Activated CD4-positive, alpha-beta memory T cell treated with anti-CD3 and anti-CD28 coated beads for 36 hours (primary cell): ENCODE measurements at regions of chr11 and their contacts with region 1.

Region 1: GRCh38 chr11:119363851-119364590 is 17.5 kb downstream of the USP2 start:
- DNase-seq: peak; percentile 64
- H3K4me3 Mint-ChIP-seq: no peak overlapping the region
- H3K27ac Mint-ChIP-seq: no peak overlapping the region
- H3K4me1 Mint-ChIP-seq: peaks cover 34% of the 10 kb centered on the region
- H3K27me3 Mint-ChIP-seq: peaks cover 48% of the 10 kb centered on the region

Region 2: DNA sequence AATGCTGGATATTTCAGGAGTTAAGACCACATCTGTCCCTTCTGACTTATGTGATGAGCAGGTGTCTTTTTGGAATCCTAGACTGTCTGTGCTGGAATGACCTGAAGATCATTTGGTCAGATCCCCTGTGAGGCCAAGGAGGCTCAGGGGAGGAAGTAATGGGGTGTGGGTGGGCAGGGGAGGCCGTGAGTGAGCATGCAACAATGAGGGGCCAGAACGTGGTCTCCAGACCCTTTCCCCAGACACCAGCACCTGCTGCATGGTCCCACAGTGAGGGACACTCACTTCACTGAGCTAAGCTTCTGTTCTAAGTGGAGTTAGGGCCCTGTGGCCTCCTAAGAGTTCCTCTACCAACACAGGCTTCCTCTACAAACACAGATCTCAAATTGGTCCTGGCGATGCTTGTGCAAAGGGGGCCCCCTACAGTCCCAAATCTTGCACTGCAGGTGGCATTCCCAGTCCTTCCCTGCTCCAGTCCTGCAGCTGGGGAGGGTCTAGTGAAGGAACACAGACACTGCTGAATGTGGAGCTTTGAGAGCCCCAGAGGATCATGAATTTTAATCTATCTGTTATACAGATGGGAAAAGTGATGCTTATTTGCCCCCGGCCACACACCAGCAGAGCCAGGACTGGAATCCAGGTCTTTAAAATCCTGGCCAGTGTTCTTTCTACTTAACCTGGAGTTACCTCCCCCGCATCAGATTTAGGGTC is 10.1 kb after region 1 on chr11:
- CTCF ChIA-PET with region 1: interaction called, 237 read pairs
- POLR2A ChIA-PET with region 1: interaction called, 3 read pairs
- intact Hi-C with region 1: no loop called
- DNase-seq: peak; percentile 73
- H3K4me3 Mint-ChIP-seq: no peak overlapping the region
- H3K27ac Mint-ChIP-seq: no peak overlapping the region
- H3K4me1 Mint-ChIP-seq: peaks cover 8% of the 10 kb centered on the region
- H3K27me3 Mint-ChIP-seq: peaks cover 1% of the 10 kb centered on the region

Region 3: GRCh38 chr11:119381181-119381988 is 17.4 kb after region 1 on chr11 and contains the start of gene USP2:
- CTCF ChIA-PET with region 1: interaction called, 237 read pairs
- POLR2A ChIA-PET with region 1: interaction called, 3 read pairs
- intact Hi-C with region 1: no loop called
- DNase-seq: peak; percentile 98
- H3K4me3 Mint-ChIP-seq: no peak within 1 kb of the TSS
- H3K27ac Mint-ChIP-seq: peak within 1 kb of the TSS; percentile 2
- H3K4me1 Mint-ChIP-seq: peaks cover 10% of the 10 kb centered on the region
- H3K27me3 Mint-ChIP-seq: no peaks in the 10 kb centered on the region
- total RNA-seq, gene USP2: 1.4 to 2.2 TPM

Region 4: GRCh38 chr11:119427279-119427678 is 63.3 kb after region 1 on chr11:
- CTCF ChIA-PET with region 1: no interaction called
- POLR2A ChIA-PET with region 1: no interaction called
- intact Hi-C with region 1: loop called (anchors 1 kb)
- DNase-seq: peak; percentile 26
- H3K4me3 Mint-ChIP-seq: no peak overlapping the region
- H3K27ac Mint-ChIP-seq: no peak overlapping the region
- H3K4me1 Mint-ChIP-seq: peaks cover 23% of the 10 kb centered on the region
- H3K27me3 Mint-ChIP-seq: peaks cover 42% of the 10 kb centered on the region